ENCODE measurements at regions of chr2 and their contacts with region 1.

Region 1: DNA sequence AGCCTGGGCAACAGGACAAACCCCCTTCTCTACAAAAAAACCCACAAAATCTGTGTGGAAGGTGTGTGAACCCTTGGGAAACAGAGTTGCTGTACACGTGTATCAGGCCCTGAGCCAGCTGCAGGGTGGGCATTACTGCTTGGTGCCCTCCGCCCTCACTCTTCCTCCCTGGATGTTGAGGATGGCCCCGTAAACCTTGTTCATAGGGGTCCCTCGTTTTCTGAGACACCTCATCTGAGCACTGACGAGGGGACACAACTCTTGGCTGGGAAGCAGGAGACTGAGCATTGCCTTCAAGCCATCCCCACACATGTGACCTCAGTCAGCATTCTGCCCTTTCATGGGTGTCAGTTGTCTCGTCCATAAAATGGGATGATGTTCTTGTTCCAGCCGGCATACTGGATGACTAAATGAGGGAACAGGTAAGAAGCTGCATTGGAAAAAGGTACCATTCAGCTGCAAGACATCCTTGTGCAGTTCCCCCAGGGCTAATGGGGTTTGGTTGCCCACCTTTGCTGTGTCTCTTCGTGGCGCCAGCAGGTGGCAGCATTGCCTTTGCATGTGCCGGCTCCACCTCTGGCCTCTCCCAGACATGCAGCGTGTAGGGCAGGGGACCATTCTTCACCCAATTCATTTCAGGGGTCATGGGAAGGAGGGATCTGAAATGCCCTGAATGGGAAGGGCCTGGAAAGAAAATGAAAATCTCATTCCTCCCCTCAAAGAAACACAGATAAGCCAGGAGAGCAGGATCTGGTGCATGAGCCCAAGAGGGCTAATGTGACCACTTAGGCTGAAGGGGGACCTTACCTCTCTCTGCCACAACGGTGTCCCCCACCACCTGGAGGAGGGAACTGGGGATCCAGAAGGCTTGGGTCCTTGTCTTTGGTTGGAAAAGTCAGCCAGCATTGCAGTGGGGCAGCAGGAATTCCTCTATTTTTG is 36.4 kb upstream of the HAAO start:
- DNase-seq: peak; percentile 89
- H3K4me3 ChIP-seq: no peak overlapping the region
- H3K27ac ChIP-seq: peak overlapping the region in 2 of 4 donors; percentile 45 to 48
- H3K4me1 ChIP-seq: peaks cover 0 to 26% (median 22%) of the 10 kb centered on the region in 4 donors
- H3K27me3 ChIP-seq: no peaks in the 10 kb centered on the region
- CTCF ChIP-seq: peak; percentile 80 to 97 (median 94)
- EP300 ChIP-seq: no peak
- POLR2A ChIP-seq: no peak

Region 2: GRCh38 chr2:42813024-42813423 is 15.7 kb before region 1 on chr2:
- intact Hi-C with region 1: no loop called
- DNase-seq: no peak
- H3K4me3 ChIP-seq: no peak overlapping the region
- H3K27ac ChIP-seq: no peak overlapping the region
- H3K4me1 ChIP-seq: peaks cover 0 to 22% (median 14%) of the 10 kb centered on the region in 4 donors
- H3K27me3 ChIP-seq: no peaks in the 10 kb centered on the region
- CTCF ChIP-seq: peak; percentile 30 to 62 (median 50)
- EP300 ChIP-seq: no peak
- POLR2A ChIP-seq: no peak

Region 3: GRCh38 chr2:42906557-42907411 is 78.0 kb after region 1 on chr2:
- intact Hi-C with region 1: loop called (anchors 2 kb)
- DNase-seq: peak; percentile 82
- H3K4me3 ChIP-seq: no peak overlapping the region
- H3K27ac ChIP-seq: peak overlapping the region; percentile 71 to 86 (median 79)
- H3K4me1 ChIP-seq: peaks cover 0 to 54% (median 47%) of the 10 kb centered on the region in 4 donors
- H3K27me3 ChIP-seq: no peaks in the 10 kb centered on the region
- CTCF ChIP-seq: no peak
- EP300 ChIP-seq: no peak
- POLR2A ChIP-seq: no peak

Region 4: DNA sequence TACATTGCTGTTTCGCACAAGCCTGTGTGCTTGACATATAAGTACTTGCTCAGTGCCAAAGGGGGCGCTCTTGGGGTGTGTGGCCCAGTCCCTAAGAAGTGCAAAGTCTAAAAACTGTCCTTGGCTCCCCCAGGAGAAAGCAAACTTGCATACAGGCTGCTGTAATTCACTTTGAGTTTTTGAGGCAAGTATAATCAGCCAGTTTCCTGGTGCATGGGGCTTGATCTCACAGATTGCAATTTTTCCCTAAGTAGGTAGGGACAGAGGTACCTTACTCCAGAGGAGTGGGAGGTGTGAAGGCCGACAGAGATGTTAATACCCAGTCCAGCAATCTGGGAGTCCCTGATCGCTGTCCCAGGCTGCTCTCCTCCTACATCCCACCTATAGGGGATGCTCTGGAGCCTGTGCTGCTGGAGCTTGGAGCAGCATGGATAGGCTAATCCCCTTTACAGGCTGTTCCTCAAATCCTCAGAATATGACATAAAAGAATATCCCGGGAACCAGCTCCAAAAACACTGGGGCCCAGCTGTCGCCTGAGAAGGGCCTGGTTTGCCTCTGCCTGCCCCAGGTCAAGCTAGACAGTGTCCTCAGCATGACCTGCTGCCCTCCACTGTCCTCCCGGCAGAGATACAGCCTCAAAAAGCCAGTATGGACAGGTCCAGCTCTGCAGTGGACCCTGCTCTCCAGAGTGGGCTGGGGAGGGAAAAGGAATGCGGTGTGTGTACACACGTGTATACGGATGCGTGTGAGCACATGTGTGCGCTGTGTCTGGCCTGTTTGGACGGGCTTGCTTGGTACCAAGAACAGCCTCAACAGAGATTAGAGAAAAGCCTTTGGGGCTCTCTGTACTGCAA is 100.2 kb after region 1 on chr2:
- intact Hi-C with region 1: loop called (anchors 5 kb)
- DNase-seq: no peak
- H3K4me3 ChIP-seq: no peak overlapping the region
- H3K27ac ChIP-seq: peak overlapping the region; percentile 86 to 95 (median 91)
- H3K4me1 ChIP-seq: peaks cover 0 to 88% (median 85%) of the 10 kb centered on the region in 4 donors
- H3K27me3 ChIP-seq: no peaks in the 10 kb centered on the region
- CTCF ChIP-seq: peak in 1 of 4 experiments; percentile 23
- EP300 ChIP-seq: no peak
- POLR2A ChIP-seq: no peak

Region 5: GRCh38 chr2:42939411-42940206 is 110.9 kb after region 1 on chr2:
- intact Hi-C with region 1: loop called (anchors 2 kb)
- DNase-seq: no peak
- H3K4me3 ChIP-seq: no peak overlapping the region
- H3K27ac ChIP-seq: peak overlapping the region; percentile 10 to 54 (median 32)
- H3K4me1 ChIP-seq: peaks cover 0 to 14% (median 13%) of the 10 kb centered on the region in 4 donors
- H3K27me3 ChIP-seq: no peaks in the 10 kb centered on the region
- CTCF ChIP-seq: no peak
- EP300 ChIP-seq: no peak
- POLR2A ChIP-seq: no peak

Region 6: GRCh38 chr2:43542285-43542937 is 713.7 kb after region 1 on chr2:
- intact Hi-C with region 1: loop called (anchors 5 kb)
- DNase-seq: no peak
- H3K4me3 ChIP-seq: no peak overlapping the region
- H3K27ac ChIP-seq: no peak overlapping the region
- H3K4me1 ChIP-seq: peaks cover 0 to 41% (median 18%) of the 10 kb centered on the region in 4 donors
- H3K27me3 ChIP-seq: no peaks in the 10 kb centered on the region
- CTCF ChIP-seq: peak; percentile 43 to 62 (median 58)
- EP300 ChIP-seq: no peak
- POLR2A ChIP-seq: no peak

Region 7: GRCh38 chr2:43579275-43579981 is 750.7 kb after region 1 on chr2:
- intact Hi-C with region 1: loop called (anchors 2 kb)
- DNase-seq: no peak
- H3K4me3 ChIP-seq: no peak overlapping the region
- H3K27ac ChIP-seq: no peak overlapping the region
- H3K4me1 ChIP-seq: peaks cover 0 to 6% (median 2%) of the 10 kb centered on the region in 4 donors
- H3K27me3 ChIP-seq: no peaks in the 10 kb centered on the region
- CTCF ChIP-seq: no peak
- EP300 ChIP-seq: no peak
- POLR2A ChIP-seq: no peak